ENCODE measurements at regions of chr20 and their contacts with region 1.

Region 1: DNA sequence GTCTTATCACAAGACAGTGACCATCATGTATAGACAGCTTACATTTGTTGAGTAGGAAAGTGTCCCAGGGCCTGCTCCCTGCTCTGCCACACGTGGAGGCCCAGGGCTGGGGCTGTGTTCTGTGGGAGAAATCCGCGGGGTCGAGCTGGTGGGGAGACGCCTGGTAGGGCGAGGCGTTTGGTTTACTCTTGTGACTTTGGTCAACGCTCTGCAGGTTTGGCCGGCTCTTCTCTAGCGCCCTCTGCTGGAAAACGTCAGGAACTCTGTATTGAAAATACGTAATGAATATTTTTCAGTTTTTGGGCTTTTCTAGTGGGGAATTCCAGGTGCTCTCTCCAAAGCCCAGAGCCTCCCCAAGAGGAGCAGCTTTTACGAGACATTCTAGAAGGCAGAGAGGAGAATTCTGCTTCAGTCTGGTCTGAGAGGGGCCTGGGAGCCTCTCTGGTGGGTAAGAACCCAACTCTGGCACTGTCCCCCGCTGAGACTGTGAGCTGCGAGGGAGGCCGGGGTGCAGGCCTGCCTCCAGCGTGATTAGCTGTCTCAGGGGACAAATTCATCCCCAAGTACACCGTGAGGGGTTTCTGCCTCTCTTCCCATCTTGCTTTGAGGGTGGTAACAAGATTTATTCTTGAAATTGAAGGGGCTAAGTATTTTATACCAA is 112.6 kb upstream of the RALGAPA2 start:
- DNase-seq: peak; percentile 58
- ATAC-seq: peak; percentile 72

Region 2: DNA sequence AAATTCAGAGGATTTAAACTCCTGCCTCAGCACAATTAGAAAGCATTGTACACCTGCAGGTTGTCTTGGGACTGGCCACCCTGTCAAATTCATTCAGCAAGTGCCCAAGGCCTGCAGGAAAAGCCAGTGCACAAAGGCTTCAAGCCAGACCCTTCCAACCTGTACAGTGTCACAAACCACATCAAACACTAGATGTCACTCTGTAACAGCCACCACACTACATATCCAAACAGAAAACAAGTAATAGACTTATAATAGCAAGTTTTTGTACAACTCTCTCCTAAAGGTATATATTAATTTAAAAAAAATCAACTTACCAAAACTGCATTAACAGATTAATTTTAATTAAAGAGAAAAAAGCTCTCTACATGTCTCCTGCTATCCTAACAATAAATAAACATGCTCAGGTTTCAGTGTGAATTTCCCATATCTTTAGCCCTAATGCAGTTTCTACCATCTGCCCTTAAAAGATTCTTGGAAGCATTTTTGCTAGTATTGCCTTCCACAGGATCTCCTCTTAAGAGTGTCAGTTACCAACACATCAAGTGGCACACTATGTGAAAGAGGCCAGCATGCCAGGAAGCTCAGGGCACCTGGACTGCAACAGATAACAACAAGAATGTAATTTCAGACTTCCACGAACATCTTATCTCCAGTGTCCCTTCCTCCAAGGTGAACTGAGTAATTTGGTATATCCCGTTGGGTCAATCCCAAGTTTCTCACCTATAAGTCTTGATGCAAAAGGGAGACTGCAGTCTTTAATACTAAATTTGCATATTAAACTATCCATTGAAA is 160.1 kb before region 1 on chr20:
- intact Hi-C with region 1: loop called (anchors 1 to 5 kb)
- DNase-seq: no peak
- ATAC-seq: peak; percentile 80 to 83

Region 3: DNA sequence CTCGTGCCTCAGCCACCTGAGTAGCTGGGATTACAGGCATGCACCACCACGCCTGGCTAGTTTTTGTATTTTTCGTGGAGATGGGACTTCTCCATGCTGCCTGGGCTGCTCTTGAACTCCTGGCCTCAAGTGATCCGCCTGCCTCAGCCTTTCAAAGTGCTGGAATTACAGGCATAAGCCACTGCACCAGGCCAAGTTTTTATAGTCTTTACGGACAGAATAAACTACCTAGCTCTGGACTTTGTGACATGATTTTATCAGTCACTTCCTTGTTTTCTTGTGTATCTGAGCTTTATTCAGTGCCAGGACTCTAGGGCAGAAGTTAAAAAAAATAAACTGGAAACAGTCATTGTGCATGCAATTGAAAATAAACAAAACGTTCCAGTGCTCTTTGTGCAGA is 65.9 kb before region 1 on chr20:
- intact Hi-C with region 1: no loop called
- DNase-seq: no peak
- ATAC-seq: peak in 1 of 2 donors; percentile 14

Region 4: DNA sequence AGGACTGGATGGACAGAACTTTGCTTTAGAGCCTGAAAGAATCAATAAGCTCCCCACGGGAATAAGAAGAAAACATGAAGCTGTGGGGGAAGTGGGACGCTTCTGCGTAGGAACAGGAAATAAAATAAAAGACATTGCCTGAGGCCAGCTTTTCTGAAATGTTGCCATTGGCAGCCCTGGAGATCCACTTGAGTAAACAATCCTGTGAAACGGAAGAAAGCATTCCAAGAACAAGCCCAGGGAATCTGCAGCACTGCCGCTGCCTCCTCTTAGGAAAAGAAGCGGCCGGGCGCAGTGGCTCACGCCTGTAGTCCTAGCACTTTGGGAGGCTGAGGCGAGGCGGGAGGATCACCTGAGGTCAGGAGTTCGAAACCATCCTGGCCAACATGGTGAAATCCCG is 69.7 kb after region 1 on chr20:
- intact Hi-C with region 1: no loop called
- DNase-seq: no peak
- ATAC-seq: no peak